Right ventricle myocardium inferior (tissue), 1 donor: ENCODE measurements at regions of chr18 and their contacts with region 1.

Region 1: DNA sequence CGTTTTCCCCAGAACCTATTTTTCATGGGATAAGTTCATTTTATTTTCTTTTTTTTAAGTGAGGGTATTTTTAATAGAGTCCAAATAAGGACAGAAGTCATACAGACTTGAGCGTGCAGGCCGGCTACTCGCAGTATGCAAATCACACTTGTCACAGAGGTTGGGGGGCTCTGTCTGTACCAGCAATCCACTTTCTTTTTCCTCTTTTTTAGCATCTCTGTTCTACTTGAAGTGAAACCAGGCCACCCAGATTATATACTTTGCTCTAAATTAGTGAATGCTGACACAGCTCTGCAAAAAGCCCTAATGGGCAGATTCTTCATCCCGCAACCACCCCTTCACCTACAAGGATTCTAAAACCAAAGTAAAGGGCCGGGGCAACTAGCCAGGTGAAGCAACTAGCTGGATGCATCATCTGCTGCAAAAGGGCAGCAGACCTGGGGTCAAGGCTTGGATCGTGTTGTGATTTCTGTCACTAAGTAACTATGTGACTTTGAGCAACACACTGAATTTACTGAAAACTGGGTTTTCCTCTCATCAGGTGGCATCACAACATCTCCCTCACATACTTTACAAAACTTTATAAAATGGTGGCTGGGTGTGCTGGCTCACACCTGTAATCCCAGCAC is 18.4 kb downstream of the KDSR start:
- DNase-seq: no peak
- ATAC-seq: no peak

Region 2: GRCh38 chr18:63329431-63330145 is 19.0 kb before region 1 on chr18:
- intact Hi-C with region 1: loop called (anchors 1 kb)
- DNase-seq: no peak
- ATAC-seq: no peak

Region 3: DNA sequence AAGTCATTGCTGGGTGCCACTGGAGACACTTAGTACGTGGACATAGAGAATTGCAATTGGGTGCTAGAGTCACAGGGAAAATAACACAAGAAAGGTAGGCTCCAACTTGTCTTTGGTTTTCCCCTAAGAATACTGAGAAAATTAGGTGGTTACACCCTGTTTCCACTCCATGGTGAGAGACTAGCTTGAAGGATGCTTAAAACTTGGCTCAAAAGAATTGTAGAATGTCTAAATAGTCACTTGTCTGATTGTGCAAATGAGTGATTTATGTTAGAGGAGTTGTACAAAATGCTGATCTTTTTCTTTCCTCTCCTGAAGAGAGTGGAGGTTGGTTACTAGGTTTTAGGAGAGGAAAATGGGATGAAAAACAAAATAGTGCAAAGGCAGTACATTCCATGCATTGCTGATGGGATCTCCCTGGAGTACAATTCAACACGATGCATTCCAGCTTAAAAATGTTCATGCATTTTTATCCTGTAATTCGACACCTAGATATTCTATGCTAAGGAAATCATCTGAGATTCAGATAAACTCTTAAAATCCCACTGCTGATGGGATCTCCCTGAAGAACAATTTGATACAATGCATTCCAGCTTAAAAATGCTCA is 191.4 kb after region 1 on chr18:
- intact Hi-C with region 1: no loop called
- DNase-seq: no peak
- ATAC-seq: no peak